Activated CD4-positive, alpha-beta memory T cell treated with anti-CD3 and anti-CD28 coated beads for 36 hours (primary cell): ENCODE measurements at regions of chr1 and their contacts with region 1.

Region 1: DNA sequence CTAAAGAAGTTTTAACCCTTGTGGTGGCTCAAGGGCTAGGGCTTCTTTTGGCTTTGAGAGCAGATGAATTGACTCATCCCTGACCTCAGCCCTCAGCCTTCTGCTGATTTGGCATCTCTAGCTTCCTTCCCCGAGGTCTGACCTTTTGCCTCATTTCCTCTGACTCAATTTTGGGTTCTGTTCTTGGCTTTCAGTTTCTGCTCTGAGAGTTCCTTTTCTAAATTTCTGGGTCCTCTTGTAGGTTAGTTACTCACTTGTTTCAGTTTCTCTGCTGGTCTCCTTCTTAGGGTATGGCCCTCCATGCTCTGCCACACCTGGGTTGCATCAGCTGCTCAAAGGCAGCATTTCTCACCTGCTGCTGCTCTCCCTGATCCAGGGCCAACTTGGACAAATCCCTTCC is 19.4 kb downstream of the PDE4B start:
- DNase-seq: peak; percentile 79
- H3K4me3 Mint-ChIP-seq: no peak overlapping the region
- H3K27ac Mint-ChIP-seq: peak overlapping the region; percentile 11
- H3K4me1 Mint-ChIP-seq: peaks cover 18% of the 10 kb centered on the region
- H3K27me3 Mint-ChIP-seq: peaks cover 17% of the 10 kb centered on the region

Region 2: DNA sequence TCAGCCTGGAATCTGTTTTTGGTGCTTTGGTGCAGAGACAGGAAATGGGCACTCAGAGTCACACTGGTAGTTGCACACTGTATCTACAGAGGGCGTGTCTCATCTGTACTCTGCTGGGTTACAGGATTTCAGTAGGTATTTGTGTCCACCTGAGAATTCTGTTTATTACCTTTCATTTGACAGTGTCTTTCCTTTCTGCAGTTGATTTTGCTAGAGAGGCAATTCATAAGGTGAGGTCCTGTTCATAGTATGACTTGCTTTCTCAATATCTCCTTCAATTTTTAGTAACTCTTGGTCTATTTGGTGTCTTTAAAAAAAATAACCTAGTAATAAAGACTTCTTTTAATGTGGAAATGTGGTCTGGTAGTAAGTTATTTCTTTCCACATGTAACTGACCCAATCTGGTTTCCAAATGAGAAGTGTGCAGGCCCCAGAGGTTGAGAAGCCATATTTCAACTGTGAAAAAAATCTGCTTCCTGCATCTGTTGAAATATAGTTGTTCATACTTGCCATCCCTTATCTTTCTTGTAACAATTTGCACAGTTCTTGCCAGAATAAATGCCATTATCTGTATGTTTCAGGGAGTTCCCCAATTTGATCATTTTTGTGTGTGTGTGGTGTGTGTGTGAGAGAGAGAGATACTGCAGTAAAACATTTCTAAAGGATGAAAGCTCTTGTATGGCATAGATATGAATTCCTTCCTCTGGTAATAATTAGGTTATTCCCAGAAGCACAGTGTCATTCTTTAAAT is 581.2 kb before region 1 on chr1:
- CTCF ChIA-PET with region 1: no interaction called
- POLR2A ChIA-PET with region 1: no interaction called
- intact Hi-C with region 1: loop called (anchors 1 kb)
- DNase-seq: peak; percentile 24
- H3K4me3 Mint-ChIP-seq: no peak overlapping the region
- H3K27ac Mint-ChIP-seq: peak overlapping the region; percentile 16
- H3K4me1 Mint-ChIP-seq: peaks cover 17% of the 10 kb centered on the region
- H3K27me3 Mint-ChIP-seq: peaks cover 7% of the 10 kb centered on the region

Region 3: GRCh38 chr1:65792669-65793358 is 19.3 kb before region 1 on chr1 and contains the start of gene PDE4B:
- CTCF ChIA-PET with region 1: no interaction called
- POLR2A ChIA-PET with region 1: no interaction called
- intact Hi-C with region 1: no loop called
- DNase-seq: no peak
- H3K4me3 Mint-ChIP-seq: no peak within 1 kb of the TSS
- H3K27ac Mint-ChIP-seq: no peak within 1 kb of the TSS
- H3K4me1 Mint-ChIP-seq: no peaks in the 10 kb centered on the region
- H3K27me3 Mint-ChIP-seq: peaks cover 39% of the 10 kb centered on the region
- total RNA-seq, gene PDE4B: 34.7 to 38.3 TPM

Region 4: DNA sequence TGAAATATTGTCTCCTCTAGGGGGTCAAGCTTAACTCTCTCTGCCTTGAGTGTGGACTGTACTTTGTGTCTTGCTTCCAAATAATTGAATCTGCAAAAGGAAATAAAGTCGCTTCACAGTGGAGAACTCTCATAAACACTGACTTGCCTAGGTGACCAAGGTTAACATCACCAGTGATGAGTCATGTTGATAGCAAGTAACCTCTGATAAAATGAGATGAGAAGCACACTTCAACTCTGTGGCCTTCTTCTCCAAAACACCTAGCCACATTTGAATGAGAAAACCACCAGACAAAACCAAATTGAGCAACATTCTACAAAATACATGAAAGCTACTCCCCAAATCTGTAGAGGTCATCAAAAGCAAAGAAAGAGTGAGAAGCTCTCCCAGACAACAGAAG is 18.2 kb after region 1 on chr1:
- CTCF ChIA-PET with region 1: no interaction called
- POLR2A ChIA-PET with region 1: no interaction called
- intact Hi-C with region 1: loop called (anchors 1 kb)
- DNase-seq: no peak
- H3K4me3 Mint-ChIP-seq: no peak overlapping the region
- H3K27ac Mint-ChIP-seq: no peak overlapping the region
- H3K4me1 Mint-ChIP-seq: peaks cover 3% of the 10 kb centered on the region
- H3K27me3 Mint-ChIP-seq: peaks cover 13% of the 10 kb centered on the region

Region 5: GRCh38 chr1:65952696-65953095 is 140.6 kb after region 1 on chr1:
- CTCF ChIA-PET with region 1: no interaction called
- POLR2A ChIA-PET with region 1: no interaction called
- intact Hi-C with region 1: loop called (anchors 5 kb)
- DNase-seq: no peak
- H3K4me3 Mint-ChIP-seq: no peak overlapping the region
- H3K27ac Mint-ChIP-seq: no peak overlapping the region
- H3K4me1 Mint-ChIP-seq: peaks cover 12% of the 10 kb centered on the region
- H3K27me3 Mint-ChIP-seq: peaks cover 2% of the 10 kb centered on the region

Region 6: DNA sequence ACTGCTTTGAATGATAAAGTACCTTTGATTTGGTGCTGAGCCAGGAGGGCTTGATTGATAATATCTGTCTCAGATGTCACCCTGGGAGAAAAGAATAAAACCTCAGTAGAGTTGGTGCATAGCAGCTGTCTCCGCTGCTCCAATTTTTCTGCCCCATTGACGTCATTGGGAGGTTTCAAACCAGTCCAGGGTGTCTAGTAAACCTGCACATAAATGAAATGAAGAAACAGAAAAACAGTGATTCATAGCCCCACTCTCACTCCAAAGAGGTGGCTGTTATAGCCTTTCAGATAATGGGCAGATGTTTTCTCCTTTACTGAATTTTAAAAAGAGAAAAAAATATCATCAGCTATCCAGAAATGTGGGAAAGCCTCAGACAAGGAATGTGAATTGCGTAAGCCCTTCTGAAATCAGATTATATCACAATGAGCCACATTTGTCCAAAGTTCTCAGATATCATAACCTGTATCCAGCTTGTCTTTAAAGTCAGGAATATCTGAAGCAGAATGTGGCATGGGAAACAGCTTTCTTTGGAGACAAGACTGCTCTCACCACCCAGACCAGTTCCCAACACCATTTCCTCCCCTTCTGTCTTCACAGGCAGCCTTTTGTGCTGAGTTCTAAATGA is 370.6 kb after region 1 on chr1:
- CTCF ChIA-PET with region 1: no interaction called
- POLR2A ChIA-PET with region 1: no interaction called
- intact Hi-C with region 1: loop called (anchors 2 kb)
- DNase-seq: peak; percentile 66
- H3K4me3 Mint-ChIP-seq: no peak overlapping the region
- H3K27ac Mint-ChIP-seq: no peak overlapping the region
- H3K4me1 Mint-ChIP-seq: peaks cover 23% of the 10 kb centered on the region
- H3K27me3 Mint-ChIP-seq: peaks cover 7% of the 10 kb centered on the region

Region 7: DNA sequence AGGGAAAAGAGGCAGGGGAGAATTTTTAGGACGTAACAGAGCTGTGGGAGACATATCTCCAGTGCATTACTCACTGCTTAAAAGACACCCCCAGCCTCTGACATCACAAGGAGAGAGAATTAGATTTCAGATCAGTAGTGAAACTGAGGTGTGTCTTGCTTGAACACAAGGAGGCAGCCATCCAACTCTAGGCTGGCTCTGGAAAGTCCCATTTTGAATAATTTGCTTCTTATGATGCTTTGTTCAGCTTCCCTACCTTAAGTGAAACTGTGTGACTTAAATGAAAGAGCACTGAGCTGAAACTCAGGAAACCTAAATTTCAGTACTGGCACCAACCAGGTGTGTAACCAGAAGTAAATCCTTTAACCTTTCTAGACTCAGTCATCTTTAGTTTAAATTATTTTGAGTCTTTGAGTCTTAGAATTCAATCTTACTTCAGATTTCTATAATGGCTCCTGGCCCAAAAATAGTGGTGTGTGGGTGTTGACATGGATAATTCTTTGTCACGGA is 470.3 kb after region 1 on chr1:
- CTCF ChIA-PET with region 1: no interaction called
- POLR2A ChIA-PET with region 1: no interaction called
- intact Hi-C with region 1: loop called (anchors 1 kb)
- DNase-seq: peak; percentile 80
- H3K4me3 Mint-ChIP-seq: no peak overlapping the region
- H3K27ac Mint-ChIP-seq: peak overlapping the region; percentile 76
- H3K4me1 Mint-ChIP-seq: peaks cover 87% of the 10 kb centered on the region
- H3K27me3 Mint-ChIP-seq: no peaks in the 10 kb centered on the region

Region 8: GRCh38 chr1:66446261-66447001 is 634.4 kb after region 1 on chr1:
- CTCF ChIA-PET with region 1: interaction called, 7 read pairs
- POLR2A ChIA-PET with region 1: no interaction called
- intact Hi-C with region 1: loop called (anchors 1 kb)
- DNase-seq: peak; percentile 23
- H3K4me3 Mint-ChIP-seq: peak overlapping the region; percentile 6
- H3K27ac Mint-ChIP-seq: peak overlapping the region; percentile 86
- H3K4me1 Mint-ChIP-seq: peaks cover 21% of the 10 kb centered on the region
- H3K27me3 Mint-ChIP-seq: peaks cover 4% of the 10 kb centered on the region